ENCODE measurements at regions of chr5 and their contacts with region 1.

Region 1: DNA sequence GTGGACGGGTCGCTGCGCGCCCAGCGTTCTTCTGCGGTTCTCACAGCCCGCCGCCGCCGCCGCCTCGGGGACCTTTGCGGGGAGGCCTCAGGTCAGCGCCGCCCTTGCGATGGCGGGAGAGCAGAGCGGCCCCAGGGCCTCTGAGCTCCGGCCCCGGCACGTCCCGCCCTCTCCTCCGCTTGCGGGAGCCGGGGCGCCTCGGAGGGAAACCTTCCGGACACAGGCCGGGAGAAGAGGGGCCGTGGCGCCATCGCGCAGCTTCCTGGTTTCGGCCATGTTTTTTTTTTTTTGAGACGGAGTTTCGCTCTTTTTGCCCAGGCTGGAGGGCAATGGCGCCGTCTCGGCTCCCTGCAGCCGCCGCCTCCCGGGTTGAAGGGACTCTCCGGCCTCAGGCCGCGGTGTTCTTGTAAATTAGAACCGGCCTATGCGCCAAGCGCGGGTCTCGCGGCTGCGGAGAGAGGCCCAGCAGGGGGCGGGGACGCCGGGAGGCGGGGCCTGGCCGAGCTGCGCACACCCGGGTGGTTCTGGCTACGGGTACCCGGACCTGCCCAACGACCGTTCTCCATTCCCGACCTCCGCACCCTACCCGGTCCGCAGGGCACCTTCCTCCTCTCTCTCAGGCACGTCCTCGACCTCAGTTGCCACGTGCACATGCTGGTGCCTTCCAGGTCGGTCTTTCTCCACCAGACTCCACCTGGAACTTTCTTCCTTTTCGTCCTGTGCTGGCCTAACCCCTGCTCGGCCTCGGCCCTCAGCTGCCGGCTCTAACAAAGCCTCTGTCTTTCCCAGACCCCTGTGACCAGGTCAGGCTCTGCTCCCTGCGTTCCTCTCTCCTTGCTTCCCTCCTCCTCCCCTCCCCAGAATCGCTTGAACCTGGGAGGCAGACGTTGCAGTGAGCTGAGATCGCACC is 28.8 kb upstream of the MGAT1 start:
- DNase-seq: peak; percentile 70
- H3K4me3 Mint-ChIP-seq: peak overlapping the region; percentile 93
- H3K27ac Mint-ChIP-seq: peak overlapping the region; percentile 96
- H3K4me1 Mint-ChIP-seq: peaks cover 15% of the 10 kb centered on the region
- H3K27me3 Mint-ChIP-seq: no peaks in the 10 kb centered on the region
- CTCF ChIP-seq: no peak

Region 2: DNA sequence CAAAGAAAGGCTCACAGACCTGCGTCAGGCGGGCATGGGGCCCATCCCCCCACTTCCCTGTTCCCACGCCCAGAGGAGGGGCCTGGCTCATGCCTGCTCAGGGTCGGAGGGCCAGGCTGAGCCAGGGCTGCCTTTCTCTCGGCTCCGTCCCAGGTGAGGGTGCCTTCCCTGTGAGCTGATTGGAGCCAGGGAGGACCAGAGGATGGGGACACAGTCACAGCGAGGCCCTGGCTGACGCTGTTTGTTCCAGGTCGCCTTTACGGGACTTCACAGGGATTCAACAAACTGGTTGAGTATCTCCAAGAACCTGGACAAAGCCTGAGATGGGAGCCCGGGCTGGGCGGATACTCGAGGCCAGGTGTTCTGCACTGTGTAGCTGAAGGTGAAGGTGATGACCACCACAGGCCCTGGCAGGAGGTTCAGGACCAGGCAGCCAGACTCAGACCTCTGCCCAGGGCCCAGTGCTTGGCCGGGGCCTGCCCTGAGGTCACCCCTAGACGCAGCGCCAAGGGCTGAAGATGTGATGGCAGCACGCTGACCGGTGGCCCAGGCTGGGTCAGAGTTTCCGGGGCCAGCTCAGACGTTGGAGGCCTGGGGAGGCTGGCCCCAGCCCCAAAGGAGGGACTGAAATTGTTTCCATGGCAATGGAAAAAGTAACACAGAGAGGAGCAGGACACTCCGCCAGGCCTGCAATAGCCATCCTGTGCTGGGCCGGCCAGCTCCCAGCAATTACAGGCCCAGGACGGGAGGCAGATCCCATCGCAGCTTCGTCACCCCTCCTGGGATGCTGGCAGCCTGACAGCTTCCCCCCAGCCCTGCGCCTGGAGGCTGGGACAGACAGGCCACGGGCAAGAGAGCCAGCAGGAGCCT is 1420.9 kb before region 1 on chr5:
- CTCF ChIA-PET with region 1: no interaction called
- POLR2A ChIA-PET with region 1: no interaction called
- intact Hi-C with region 1: no loop called
- DNase-seq: no peak
- H3K4me3 Mint-ChIP-seq: no peak overlapping the region
- H3K27ac Mint-ChIP-seq: no peak overlapping the region
- H3K4me1 Mint-ChIP-seq: no peaks in the 10 kb centered on the region
- H3K27me3 Mint-ChIP-seq: no peaks in the 10 kb centered on the region
- CTCF ChIP-seq: no peak

Region 3: GRCh38 chr5:180580681-180581080 is 250.7 kb before region 1 on chr5:
- CTCF ChIA-PET with region 1: no interaction called
- POLR2A ChIA-PET with region 1: no interaction called
- intact Hi-C with region 1: no loop called
- DNase-seq: no peak
- H3K4me3 Mint-ChIP-seq: no peak overlapping the region
- H3K27ac Mint-ChIP-seq: no peak overlapping the region
- H3K4me1 Mint-ChIP-seq: no peaks in the 10 kb centered on the region
- H3K27me3 Mint-ChIP-seq: no peaks in the 10 kb centered on the region
- CTCF ChIP-seq: no peak

Region 4: DNA sequence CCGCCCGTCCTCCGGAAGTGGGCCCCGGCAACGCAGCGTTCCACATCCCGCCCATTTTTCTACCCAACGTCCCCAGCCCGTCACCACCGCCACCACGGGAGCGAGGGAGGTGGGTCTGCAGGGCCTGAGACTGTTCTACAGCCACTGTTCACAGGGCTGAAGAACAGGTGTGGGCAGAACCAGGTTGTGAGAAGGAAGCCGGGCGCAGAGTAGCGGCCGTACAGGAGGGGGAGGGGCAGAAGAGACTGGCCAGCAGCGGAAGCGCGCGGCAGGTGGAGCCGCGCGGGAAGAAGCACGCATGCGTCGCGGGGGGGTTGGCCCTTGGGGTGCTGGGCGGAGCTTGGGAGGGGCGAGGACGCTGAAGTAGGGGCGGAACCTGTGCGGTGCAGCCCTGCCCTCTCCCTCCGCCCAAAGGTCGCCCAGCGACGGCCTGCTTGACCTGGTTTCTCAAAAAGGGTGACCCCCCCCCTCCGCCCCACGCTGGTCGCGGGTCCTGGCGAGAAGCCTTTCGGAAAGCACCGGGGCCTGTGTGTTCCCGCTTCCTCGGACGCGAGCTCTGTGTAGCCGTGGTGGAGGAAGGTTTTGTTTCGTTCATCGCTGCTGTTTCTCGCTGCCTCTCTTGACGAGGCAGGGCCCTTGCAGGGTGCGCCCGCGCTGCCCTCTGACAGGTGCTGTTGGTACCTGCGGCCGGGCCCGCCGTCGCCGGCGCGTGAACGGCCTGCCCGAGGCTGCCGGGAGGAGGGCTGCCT is 21.0 kb before region 1 on chr5:
- CTCF ChIA-PET with region 1: interaction called, 6 read pairs
- POLR2A ChIA-PET with region 1: interaction called, 77 read pairs
- intact Hi-C with region 1: no loop called
- DNase-seq: peak; percentile 98
- H3K4me3 Mint-ChIP-seq: peak overlapping the region; percentile 80
- H3K27ac Mint-ChIP-seq: peak overlapping the region; percentile 75
- H3K4me1 Mint-ChIP-seq: peaks cover 53% of the 10 kb centered on the region
- H3K27me3 Mint-ChIP-seq: no peaks in the 10 kb centered on the region
- CTCF ChIP-seq: no peak

Region 5: GRCh38 chr5:180817893-180818674 is 13.3 kb before region 1 on chr5:
- CTCF ChIA-PET with region 1: interaction called, 10 read pairs
- POLR2A ChIA-PET with region 1: interaction called, 77 read pairs
- intact Hi-C with region 1: no loop called
- DNase-seq: no peak
- H3K4me3 Mint-ChIP-seq: no peak overlapping the region
- H3K27ac Mint-ChIP-seq: no peak overlapping the region
- H3K4me1 Mint-ChIP-seq: no peaks in the 10 kb centered on the region
- H3K27me3 Mint-ChIP-seq: no peaks in the 10 kb centered on the region
- CTCF ChIP-seq: no peak